ENCODE measurements at regions of chr7 and their contacts with region 1.

Region 1: GRCh38 chr7:130096243-130096827 is 26.0 kb downstream of the KLHDC10 start:
- DNase-seq: no peak
- ATAC-seq: no peak
- H3K4me3 ChIP-seq: no peak overlapping the region
- H3K27ac ChIP-seq: no peak overlapping the region
- H3K4me1 ChIP-seq: peaks cover 12% of the 10 kb centered on the region
- H3K27me3 ChIP-seq: no peaks in the 10 kb centered on the region
- CTCF ChIP-seq: no peak
- EP300 ChIP-seq: no peak
- POLR2A ChIP-seq: no peak
- RAD21 ChIP-seq: no peak

Region 2: GRCh38 chr7:130084037-130084875 is 12.1 kb before region 1 on chr7:
- CTCF ChIA-PET with region 1: interaction called, 47 read pairs
- POLR2A ChIA-PET with region 1: interaction called, 3 read pairs
- RAD21 ChIA-PET with region 1: interaction called, 3 read pairs
- SMC1A ChIA-PET with region 1: interaction called, 9 read pairs
- in situ Hi-C with region 1: no loop called
- intact Hi-C with region 1: no loop called
- DNase-seq: no peak
- ATAC-seq: peak; percentile 79
- H3K4me3 ChIP-seq: no peak overlapping the region
- H3K27ac ChIP-seq: no peak overlapping the region
- H3K4me1 ChIP-seq: no peaks in the 10 kb centered on the region; the same call in 1 of the 2 replicates
- H3K27me3 ChIP-seq: no peaks in the 10 kb centered on the region
- CTCF ChIP-seq: peak; percentile 36 to 51 (median 37); a peak in 5 of 6 replicates
- EP300 ChIP-seq: no peak
- POLR2A ChIP-seq: no peak
- RAD21 ChIP-seq: no peak